Pancreas (tissue), 10 donors: ENCODE measurements at regions of chr1 and their contacts with region 1.

Region 1: DNA sequence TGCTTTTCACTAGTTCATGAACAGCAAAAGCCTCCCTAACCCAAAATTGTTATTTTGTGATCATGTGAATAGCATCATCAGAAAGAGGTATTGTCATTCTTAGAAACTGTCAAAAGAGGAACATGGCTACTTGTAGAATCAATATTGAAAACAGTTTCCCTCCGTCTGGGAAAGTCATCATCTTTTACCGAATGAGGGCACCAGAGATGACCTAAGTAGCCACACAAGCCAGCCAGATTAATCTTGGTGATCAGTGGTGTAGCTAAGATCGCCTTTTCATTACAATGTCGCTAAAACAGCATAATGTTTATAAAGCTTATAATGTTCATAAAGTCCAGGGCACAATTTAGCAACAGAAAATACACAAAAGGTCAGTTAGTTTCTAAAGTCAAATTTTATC is 136.1 kb downstream of the SIPA1L2 start:
- DNase-seq: no peak
- ATAC-seq: no peak
- H3K4me3 ChIP-seq: no peak overlapping the region
- H3K27ac ChIP-seq: no peak overlapping the region
- H3K4me1 ChIP-seq: peaks cover 0 to 10% (median 0%) of the 10 kb centered on the region in 3 donors
- H3K27me3 ChIP-seq: no peaks in the 10 kb centered on the region
- CTCF ChIP-seq: no peak

Region 2: GRCh38 chr1:232174306-232174705 is 319.6 kb before region 1 on chr1:
- intact Hi-C with region 1: loop called in 1 of 3 experiments (anchors 10 kb)
- DNase-seq: no peak
- ATAC-seq: no peak
- H3K4me3 ChIP-seq: no peak overlapping the region
- H3K27ac ChIP-seq: no peak overlapping the region
- H3K4me1 ChIP-seq: no peaks in the 10 kb centered on the region
- H3K27me3 ChIP-seq: no peaks in the 10 kb centered on the region
- CTCF ChIP-seq: no peak

Region 3: DNA sequence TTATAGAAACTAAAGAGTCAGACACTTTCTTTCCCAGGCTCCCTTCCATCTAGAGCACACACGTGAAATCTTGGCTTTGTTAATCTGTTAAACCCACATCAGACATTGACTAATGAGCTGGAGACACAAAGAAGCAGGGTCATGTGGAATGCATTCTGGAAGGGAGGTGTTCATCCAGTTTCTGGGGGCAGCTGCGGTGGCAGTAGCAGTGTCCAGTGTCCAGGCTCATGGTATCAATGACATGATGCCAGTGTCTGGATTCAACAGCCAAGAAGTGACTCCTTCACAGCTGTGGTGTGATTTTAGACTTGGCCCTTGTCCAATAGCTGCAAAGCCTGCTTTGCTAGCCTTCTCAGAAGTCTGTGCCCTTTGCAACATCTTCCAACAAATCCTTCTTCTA is 551.7 kb after region 1 on chr1:
- intact Hi-C with region 1: no loop called
- DNase-seq: no peak
- ATAC-seq: no peak
- H3K4me3 ChIP-seq: no peak overlapping the region
- H3K27ac ChIP-seq: no peak overlapping the region
- H3K4me1 ChIP-seq: no peaks in the 10 kb centered on the region
- H3K27me3 ChIP-seq: no peaks in the 10 kb centered on the region
- CTCF ChIP-seq: no peak